ENCODE measurements at regions of chr1 and their contacts with region 1.

Region 1: DNA sequence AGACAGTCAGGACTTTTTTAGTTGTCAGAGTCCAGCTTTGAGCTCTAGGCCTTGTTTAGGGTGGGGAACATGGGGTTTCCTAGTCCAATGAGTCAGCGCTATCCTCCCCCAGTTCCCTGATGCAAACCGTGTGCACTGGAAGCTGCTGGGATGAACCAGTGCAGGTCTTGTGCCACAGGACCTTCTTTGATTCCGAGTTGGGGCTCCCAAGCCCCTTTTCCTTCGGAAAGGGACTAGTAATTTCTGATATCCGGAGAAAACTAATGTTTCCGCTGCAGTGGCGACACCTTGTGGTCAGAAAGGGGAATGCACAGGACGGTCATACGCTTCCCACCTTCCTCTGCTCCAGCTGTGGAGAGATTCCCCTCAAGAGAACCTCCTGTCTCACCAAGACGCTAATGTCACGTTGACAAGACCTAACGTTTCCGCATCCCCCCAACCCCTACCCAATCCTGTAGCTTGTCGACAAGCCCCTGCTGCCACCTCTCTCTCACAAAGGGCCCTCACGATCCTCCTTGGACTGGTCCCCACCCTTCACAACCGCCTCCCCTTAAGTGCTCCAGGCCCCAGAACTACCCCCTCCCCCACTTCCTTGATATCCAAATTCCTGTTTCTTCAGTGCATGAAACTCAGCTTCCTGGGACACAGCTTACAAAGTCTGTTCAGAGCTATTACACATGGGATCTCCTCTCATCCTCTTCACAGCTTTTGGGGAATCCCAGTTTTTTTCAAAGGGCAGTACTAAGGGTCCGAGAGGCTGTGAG is 30.9 kb downstream of the GPA33 start:
- DNase-seq: peak; percentile 57 to 71 (median 68)
- H3K4me3 ChIP-seq: peak overlapping the region in 3 of 7 experiments; percentile 11 to 72 (median 38)
- H3K27ac ChIP-seq: no peak overlapping the region
- H3K4me1 ChIP-seq: peaks cover 0 to 20% (median 14%) of the 10 kb centered on the region in 4 experiments
- H3K27me3 ChIP-seq: no peaks in the 10 kb centered on the region

Region 2: GRCh38 chr1:166796620-166797236 is 262.5 kb before region 1 on chr1:
- CTCF ChIA-PET with region 1: no interaction called
- POLR2A ChIA-PET with region 1: no interaction called
- DNase-seq: no peak
- H3K4me3 ChIP-seq: no peak overlapping the region
- H3K27ac ChIP-seq: no peak overlapping the region
- H3K4me1 ChIP-seq: no peaks in the 10 kb centered on the region
- H3K27me3 ChIP-seq: no peaks in the 10 kb centered on the region

Region 3: DNA sequence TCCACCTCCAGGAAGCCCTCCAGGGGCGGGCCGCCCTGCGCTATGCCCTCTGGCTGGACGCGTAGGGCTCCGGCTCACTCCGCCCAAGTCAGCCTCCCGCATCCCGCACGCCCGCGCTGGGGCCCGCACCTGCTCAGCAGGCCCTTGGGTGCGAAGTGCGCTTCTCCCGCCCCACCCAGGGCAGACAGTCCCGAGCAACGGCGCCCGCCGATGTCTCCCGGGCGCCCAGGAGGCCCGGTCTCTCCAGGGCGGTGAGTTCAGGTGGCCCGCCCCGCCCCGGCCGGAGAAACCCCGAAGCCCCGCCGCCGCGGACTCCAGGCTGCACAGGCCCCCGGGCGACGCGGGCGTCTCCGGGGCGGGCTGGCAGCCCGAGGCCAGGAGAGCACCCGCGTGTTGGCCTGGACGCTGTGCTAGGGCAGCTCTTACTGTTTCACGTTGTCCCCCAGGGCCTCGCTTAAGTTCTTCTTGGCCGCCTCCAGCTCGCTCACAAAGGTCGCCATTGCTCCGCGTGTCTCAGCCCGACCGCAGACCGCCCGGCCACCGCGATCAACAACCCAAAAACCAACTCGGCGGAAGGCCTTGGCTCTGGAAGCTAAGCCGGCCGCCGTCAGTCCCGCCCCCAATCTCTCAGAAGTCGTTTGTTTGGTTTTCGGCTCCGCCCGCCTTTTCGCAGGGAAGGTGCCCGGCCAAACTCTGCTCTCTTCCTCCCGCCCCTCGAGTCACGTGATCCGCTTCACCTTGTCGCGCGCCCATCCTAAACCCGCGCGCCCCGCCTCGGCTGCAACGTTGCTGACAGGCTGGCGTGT is 183.3 kb before region 1 on chr1 and contains the start of gene TADA1:
- CTCF ChIA-PET with region 1: interaction called, 172 read pairs
- POLR2A ChIA-PET with region 1: no interaction called
- DNase-seq: peak; percentile 99 to 100 (median 100)
- H3K4me3 ChIP-seq: peak within 1 kb of the TSS; percentile 40 to 92 (median 80)
- H3K27ac ChIP-seq: peak within 1 kb of the TSS; percentile 66 to 85
- H3K4me1 ChIP-seq: peaks cover 7 to 23% (median 14%) of the 10 kb centered on the region in 4 experiments
- H3K27me3 ChIP-seq: no peaks in the 10 kb centered on the region

Region 4: DNA sequence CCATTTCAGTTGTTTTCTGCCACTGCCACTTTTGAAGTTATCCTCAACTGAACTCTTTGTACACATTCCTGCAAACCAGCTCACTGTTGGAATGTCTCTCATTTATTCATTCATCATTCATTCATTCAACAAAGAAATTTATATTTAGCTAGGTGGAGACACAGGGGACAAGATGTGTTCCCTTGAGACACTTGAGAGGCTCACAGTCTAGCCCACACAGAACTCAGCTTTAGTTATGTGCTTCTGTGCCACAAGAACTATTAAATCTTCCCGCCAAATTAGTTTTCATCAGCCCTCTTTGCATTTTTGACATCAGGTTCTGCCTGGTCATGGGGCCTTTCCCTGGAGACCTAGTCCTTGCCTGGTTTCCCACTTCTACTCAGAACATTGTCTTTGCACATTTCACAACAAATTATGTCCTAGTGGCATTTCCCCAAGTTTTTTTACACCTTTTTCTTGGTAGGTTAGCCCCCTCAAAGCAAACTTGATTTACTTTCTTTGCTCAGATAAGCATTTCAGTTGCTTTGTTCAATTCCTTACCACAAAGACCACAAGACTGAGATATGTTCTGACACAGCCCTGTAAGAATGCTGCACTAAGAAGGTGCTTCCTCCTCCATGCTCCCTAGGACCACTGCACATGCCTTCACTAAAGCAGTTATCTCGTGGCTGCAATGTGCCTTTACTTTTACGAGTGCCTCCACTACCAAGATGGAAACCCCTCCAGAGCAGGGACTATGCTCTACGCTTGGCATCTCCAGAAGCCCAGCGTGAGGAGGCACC is 114.8 kb before region 1 on chr1:
- CTCF ChIA-PET with region 1: interaction called, 18 read pairs
- POLR2A ChIA-PET with region 1: no interaction called
- DNase-seq: peak; percentile 37 to 90 (median 81)
- H3K4me3 ChIP-seq: peak overlapping the region in 3 of 7 experiments; percentile 22 to 49 (median 35)
- H3K27ac ChIP-seq: no peak overlapping the region
- H3K4me1 ChIP-seq: peaks cover 8 to 38% (median 28%) of the 10 kb centered on the region in 4 experiments
- H3K27me3 ChIP-seq: peaks cover 0 to 12% (median 3%) of the 10 kb centered on the region in 5 experiments

Region 5: DNA sequence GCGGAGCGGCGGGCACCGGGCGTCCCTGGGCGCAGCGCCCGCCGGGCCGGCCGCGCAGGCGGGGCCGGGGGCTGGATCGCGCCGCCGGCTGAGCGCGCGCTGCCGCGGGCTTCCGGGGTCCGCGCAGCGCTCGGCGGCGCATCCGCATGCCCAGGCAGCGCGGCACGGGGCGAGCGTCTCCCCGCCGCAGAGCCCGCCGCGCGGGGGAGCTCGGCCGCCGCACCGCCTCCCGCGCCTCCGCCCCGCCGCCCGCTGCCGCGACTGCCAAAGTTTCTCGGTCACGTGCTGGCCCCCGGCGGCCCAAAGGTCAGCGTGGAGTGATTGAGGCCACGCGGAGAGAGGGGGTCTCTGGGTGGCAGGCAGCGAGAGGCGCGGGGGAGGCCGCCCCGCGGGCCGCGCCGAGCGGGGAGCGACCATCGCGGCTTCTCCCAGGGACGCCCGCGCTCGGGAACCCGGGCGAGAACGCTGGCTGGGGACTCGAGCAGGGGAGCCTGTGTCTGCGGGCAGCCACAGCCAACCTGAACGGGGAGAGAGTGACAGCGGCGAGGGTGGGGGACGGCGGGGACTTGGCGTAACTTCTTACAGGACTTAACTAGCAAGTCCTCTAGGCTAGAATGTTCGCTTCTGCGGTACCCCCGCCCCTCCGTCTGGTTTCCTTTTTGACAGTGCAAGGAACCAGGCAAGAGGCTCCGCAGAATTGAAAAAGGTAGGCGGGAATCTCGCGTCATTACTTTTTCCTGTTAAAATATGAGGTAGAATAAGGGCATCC is 83.7 kb before region 1 on chr1 and contains the start of gene ILDR2:
- CTCF ChIA-PET with region 1: interaction called, 19 read pairs
- POLR2A ChIA-PET with region 1: interaction called, 3 read pairs
- DNase-seq: peak; percentile 54 to 85 (median 79)
- H3K4me3 ChIP-seq: peak within 1 kb of the TSS; percentile 55 to 82 (median 72)
- H3K27ac ChIP-seq: no peak within 1 kb of the TSS
- H3K4me1 ChIP-seq: peaks cover 0 to 16% (median 11%) of the 10 kb centered on the region in 4 experiments
- H3K27me3 ChIP-seq: peaks cover 0 to 54% (median 24%) of the 10 kb centered on the region in 5 experiments